HEK293T (cell line): ENCODE measurements at regions of chr12 and their contacts with region 1.

Region 1: GRCh38 chr12:117142094-117142493 is 42.9 kb upstream of the TESC start:
- DNase-seq: no peak

Region 2: DNA sequence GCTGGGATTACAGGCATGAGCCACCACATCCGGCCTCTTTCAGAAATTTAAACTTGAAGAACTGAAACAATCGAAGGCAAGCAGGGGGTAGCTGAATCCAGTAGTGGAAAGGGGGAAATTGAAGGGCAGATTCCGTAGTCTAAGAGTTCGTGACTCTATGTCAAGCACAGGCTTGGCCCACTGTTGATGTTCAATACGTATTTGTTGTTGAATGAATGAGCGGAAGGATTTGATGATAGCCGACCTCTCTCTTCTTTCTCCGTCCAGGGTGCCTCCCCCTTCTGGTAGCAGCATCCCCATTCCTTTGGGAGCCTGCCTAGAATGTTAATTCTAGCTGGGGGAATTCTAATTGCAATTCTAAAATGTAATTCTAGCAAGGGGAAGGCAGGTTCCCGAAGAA is 804.8 kb before region 1 on chr12:
- CTCF ChIA-PET with region 1: interaction called, 12 read pairs
- POLR2A ChIA-PET with region 1: no interaction called
- DNase-seq: no peak

Region 3: DNA sequence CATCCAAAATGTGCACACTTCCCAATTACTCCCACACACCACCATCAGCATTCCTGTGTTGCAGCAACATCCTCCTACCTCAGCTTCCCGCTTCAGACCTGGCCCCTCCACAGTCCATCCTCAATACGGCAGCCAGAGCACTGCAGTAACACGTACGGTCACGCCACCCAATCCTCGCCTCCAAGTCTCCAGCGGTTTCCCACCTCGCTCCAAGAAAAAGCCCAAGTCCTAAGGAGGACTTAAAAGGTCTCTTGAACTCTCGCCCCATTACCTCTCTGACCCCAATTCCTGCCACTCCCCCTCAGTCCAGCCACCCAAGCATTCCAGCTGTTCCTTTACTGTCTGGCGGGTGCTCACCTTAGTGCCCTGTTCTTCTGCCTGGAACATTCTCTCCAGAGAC is 36.2 kb after region 1 on chr12:
- CTCF ChIA-PET with region 1: no interaction called
- POLR2A ChIA-PET with region 1: no interaction called
- DNase-seq: no peak